IMR-90 (cell line): ENCODE measurements at regions of chr19 and their contacts with region 1.

Region 1: GRCh38 chr19:1094975-1095701 is at the start of gene POLR2E:
- DNase-seq: peak; percentile 98
- ATAC-seq: peak; percentile 99
- H3K4me3 ChIP-seq: peak within 1 kb of the TSS; percentile 97
- H3K27ac ChIP-seq: peak within 1 kb of the TSS; percentile 57
- H3K4me1 ChIP-seq: peaks cover 12% of the 10 kb centered on the region
- H3K27me3 ChIP-seq: no peaks in the 10 kb centered on the region
- CTCF ChIP-seq: no peak
- POLR2A ChIP-seq: peak; percentile 68; the same call in 1 of the 2 replicates
- RAD21 ChIP-seq: peak; percentile 19; the same call in 1 of the 2 replicates
- total RNA-seq, gene POLR2E: 195 and 294 TPM in 2 replicates

Region 2: GRCh38 chr19:970695-971094 is 124.4 kb before region 1 on chr19:
- CTCF ChIA-PET with region 1: no interaction called
- POLR2A ChIA-PET with region 1: no interaction called
- dilution Hi-C with region 1: no loop called
- in situ Hi-C with region 1: no loop called
- intact Hi-C with region 1: no loop called
- DNase-seq: no peak
- ATAC-seq: no peak
- H3K4me3 ChIP-seq: no peak overlapping the region
- H3K27ac ChIP-seq: no peak overlapping the region
- H3K4me1 ChIP-seq: no peaks in the 10 kb centered on the region
- H3K27me3 ChIP-seq: no peaks in the 10 kb centered on the region
- CTCF ChIP-seq: peak; percentile 45
- POLR2A ChIP-seq: no peak
- RAD21 ChIP-seq: no peak

Region 3: DNA sequence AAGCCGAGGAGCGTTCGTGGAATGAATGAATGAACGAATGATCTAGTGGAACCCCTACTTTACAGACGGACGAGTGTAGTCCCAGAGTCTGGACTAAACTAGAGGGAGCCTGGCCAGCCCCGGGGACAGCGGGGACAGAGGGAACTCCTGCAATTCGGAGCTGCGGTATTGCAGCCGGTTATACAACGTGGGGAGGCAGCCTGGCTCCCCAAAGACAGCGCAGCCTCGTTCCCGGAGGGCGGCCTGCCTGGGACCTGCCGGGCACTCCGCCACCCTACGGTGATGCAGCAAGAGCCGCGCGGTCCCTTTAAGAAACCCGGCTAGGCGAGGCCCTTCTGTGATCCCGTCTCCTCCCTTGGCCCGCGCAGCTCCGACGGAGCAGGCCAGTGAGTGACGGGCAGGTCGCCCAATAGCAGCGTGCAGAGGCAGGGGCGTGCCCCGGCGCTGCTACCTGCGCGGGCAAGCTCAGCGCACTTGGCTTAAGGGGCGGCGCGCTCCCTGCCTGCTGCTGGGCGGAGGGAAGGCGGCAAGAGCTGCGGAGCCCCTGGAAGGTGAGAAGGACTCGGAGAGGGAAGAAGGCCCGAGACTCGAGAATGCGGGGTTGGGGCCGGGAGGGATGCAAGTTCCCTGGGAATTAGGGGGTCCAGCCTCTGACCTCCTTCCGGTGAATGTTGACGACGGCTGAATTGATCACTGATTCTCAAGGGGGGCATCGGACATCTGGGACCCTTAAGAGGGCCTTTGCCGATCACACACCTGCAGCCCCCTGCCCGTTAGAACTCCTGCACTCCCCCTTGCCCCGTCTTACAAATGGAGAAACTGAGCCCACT is 55.3 kb before region 1 on chr19 and contains the start of gene ABCA7:
- CTCF ChIA-PET with region 1: no interaction called
- POLR2A ChIA-PET with region 1: interaction called, 5 read pairs
- dilution Hi-C with region 1: no loop called
- in situ Hi-C with region 1: no loop called
- intact Hi-C with region 1: loop called (anchors 2 kb)
- DNase-seq: peak; percentile 96
- ATAC-seq: peak; percentile 85
- H3K4me3 ChIP-seq: peak within 1 kb of the TSS; percentile 44
- H3K27ac ChIP-seq: no peak within 1 kb of the TSS
- H3K4me1 ChIP-seq: peaks cover 7% of the 10 kb centered on the region; the same call in 1 of the 2 replicates
- H3K27me3 ChIP-seq: no peaks in the 10 kb centered on the region
- CTCF ChIP-seq: no peak
- POLR2A ChIP-seq: peak; percentile 73
- RAD21 ChIP-seq: no peak; the same call in 1 of the 2 replicates
- total RNA-seq, gene ABCA7: 0.36 and 0.56 TPM in 2 replicates

Region 4: GRCh38 chr19:1151917-1152617 is 56.9 kb after region 1 on chr19:
- CTCF ChIA-PET with region 1: no interaction called
- POLR2A ChIA-PET with region 1: no interaction called
- dilution Hi-C with region 1: no loop called
- in situ Hi-C with region 1: no loop called
- intact Hi-C with region 1: no loop called
- DNase-seq: no peak
- ATAC-seq: no peak
- H3K4me3 ChIP-seq: no peak overlapping the region
- H3K27ac ChIP-seq: no peak overlapping the region
- H3K4me1 ChIP-seq: peaks cover 18% of the 10 kb centered on the region
- H3K27me3 ChIP-seq: no peaks in the 10 kb centered on the region
- CTCF ChIP-seq: no peak
- POLR2A ChIP-seq: no peak
- RAD21 ChIP-seq: no peak